ENCODE measurements at regions of chr1 and their contacts with region 1.

Region 1: DNA sequence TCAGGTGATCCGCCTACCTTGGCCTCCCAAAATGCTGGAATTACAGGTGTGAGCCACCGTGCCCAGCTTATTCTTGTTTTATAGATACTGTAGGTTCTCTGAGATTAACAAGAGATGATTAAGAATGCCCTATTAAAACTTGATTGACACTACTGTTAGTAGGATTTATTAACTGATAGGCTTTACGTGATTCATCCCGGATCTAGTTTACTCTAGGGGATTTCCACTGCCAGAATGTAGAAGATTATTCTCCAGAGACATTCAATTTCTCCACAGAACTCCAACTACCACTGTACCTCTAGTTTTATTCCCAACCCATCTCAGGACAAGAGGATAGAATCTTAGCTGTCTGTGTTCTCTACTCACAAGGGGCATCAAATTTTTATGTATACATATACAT is 26.3 kb upstream of the RBM34 start:
- DNase-seq: no peak
- ATAC-seq: no peak
- H3K4me3 ChIP-seq: no peak overlapping the region
- H3K4me3 Mint-ChIP-seq: no peak overlapping the region
- H3K27ac ChIP-seq: no peak overlapping the region
- H3K27ac Mint-ChIP-seq: no peak overlapping the region
- H3K4me1 ChIP-seq: no peaks in the 10 kb centered on the region
- H3K4me1 Mint-ChIP-seq: peaks cover 16% of the 10 kb centered on the region
- H3K27me3 ChIP-seq: no peaks in the 10 kb centered on the region
- H3K27me3 Mint-ChIP-seq: no peaks in the 10 kb centered on the region
- CTCF ChIP-seq: no peak

Region 2: GRCh38 chr1:235136111-235136510 is 51.2 kb before region 1 on chr1:
- CTCF ChIA-PET with region 1: no interaction called
- POLR2A ChIA-PET with region 1: no interaction called
- intact Hi-C with region 1: loop called in 1 of 2 experiments (anchors 5 kb)
- DNase-seq: no peak
- ATAC-seq: no peak
- H3K4me3 ChIP-seq: no peak overlapping the region
- H3K4me3 Mint-ChIP-seq: no peak overlapping the region
- H3K27ac ChIP-seq: no peak overlapping the region
- H3K27ac Mint-ChIP-seq: peak overlapping the region; percentile 45
- H3K4me1 ChIP-seq: no peaks in the 10 kb centered on the region
- H3K4me1 Mint-ChIP-seq: peaks cover 12% of the 10 kb centered on the region
- H3K27me3 ChIP-seq: no peaks in the 10 kb centered on the region
- H3K27me3 Mint-ChIP-seq: no peaks in the 10 kb centered on the region
- CTCF ChIP-seq: no peak

Region 3: GRCh38 chr1:235286667-235287066 is 99.4 kb after region 1 on chr1:
- CTCF ChIA-PET with region 1: no interaction called
- POLR2A ChIA-PET with region 1: no interaction called
- intact Hi-C with region 1: no loop called
- DNase-seq: no peak
- ATAC-seq: no peak
- H3K4me3 ChIP-seq: no peak overlapping the region
- H3K4me3 Mint-ChIP-seq: peak overlapping the region; percentile 8
- H3K27ac ChIP-seq: no peak overlapping the region
- H3K27ac Mint-ChIP-seq: peak overlapping the region; percentile 12
- H3K4me1 ChIP-seq: peaks cover 34% of the 10 kb centered on the region
- H3K4me1 Mint-ChIP-seq: peaks cover 75% of the 10 kb centered on the region
- H3K27me3 ChIP-seq: no peaks in the 10 kb centered on the region
- H3K27me3 Mint-ChIP-seq: no peaks in the 10 kb centered on the region
- CTCF ChIP-seq: no peak